ENCODE measurements at regions of chr13 and their contacts with region 1.

Region 1: DNA sequence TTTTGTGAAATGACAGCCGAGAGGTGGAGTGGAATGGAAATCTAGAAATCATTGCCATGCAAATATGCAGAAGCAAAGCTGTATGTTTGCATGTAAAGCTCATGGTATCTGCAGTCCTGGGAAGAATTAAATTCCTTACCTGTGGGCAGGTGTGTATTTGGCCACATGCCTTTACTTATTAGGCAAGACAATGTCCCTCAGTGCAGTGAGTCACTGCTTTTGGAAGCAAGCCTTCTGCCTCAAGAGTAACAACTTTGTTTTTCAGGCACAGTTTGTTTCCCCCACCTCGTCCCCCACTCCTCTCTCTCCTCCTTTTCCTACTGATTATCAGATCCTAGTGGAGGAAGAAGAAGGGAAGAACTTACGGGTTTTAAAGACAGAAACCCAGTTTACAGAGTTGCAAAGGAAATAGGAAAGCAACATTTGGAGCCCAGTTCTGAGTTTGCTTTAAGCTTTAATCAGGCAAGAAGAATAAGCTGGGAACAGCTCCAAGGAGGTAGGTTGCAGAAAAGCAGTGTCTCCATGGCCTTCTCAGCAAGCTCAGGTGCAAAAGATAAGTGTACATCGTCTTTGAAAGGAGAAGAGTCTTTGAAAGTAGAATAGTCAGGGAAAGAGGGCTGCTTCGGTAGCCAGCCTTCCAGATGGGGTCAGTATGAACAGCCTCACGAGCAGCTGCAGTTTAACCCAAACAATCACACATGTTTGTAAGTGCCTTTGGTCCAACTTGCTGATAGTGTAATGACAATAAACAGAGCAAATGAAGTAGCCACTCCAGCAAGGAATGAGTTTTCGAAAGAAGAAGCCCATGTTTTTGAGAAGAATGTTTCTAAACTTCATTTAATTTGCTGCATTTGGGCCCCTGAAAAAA is 190.1 kb downstream of the KLF5 start:
- DNase-seq: peak; percentile 92
- H3K4me3 Mint-ChIP-seq: peak overlapping the region; percentile 34
- H3K27ac Mint-ChIP-seq: peak overlapping the region; percentile 85
- H3K4me1 Mint-ChIP-seq: peaks cover 28% of the 10 kb centered on the region
- H3K27me3 Mint-ChIP-seq: no peaks in the 10 kb centered on the region
- CTCF ChIP-seq: no peak

Region 2: DNA sequence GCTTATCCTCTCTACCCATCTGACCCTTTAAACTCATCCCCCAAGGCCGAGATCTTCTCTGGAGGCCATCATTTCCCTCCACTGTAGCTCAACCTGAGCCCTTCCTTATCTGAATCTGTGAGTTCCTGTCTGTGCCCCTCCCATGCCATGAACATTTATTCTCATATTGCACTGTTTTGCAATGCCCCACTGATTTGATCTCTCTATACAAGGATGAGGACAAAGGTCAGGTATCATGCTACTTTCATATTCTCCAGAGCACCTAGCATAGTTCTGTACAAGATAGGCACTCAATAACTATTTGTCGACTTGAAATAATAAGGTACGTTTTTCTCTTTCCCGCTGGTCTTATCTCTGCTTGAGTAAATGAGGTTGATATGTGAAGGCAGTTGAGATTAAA is 54.6 kb before region 1 on chr13:
- CTCF ChIA-PET with region 1: interaction called, 4 read pairs
- POLR2A ChIA-PET with region 1: interaction called, 11 read pairs
- intact Hi-C with region 1: no loop called
- DNase-seq: no peak
- H3K4me3 Mint-ChIP-seq: no peak overlapping the region
- H3K27ac Mint-ChIP-seq: no peak overlapping the region
- H3K4me1 Mint-ChIP-seq: peaks cover 21% of the 10 kb centered on the region
- H3K27me3 Mint-ChIP-seq: no peaks in the 10 kb centered on the region
- CTCF ChIP-seq: no peak

Region 3: GRCh38 chr13:73200406-73200805 is 48.5 kb before region 1 on chr13:
- CTCF ChIA-PET with region 1: no interaction called
- POLR2A ChIA-PET with region 1: interaction called, 11 read pairs
- intact Hi-C with region 1: no loop called
- DNase-seq: peak; percentile 74
- H3K4me3 Mint-ChIP-seq: no peak overlapping the region
- H3K27ac Mint-ChIP-seq: peak overlapping the region; percentile 89
- H3K4me1 Mint-ChIP-seq: peaks cover 17% of the 10 kb centered on the region
- H3K27me3 Mint-ChIP-seq: no peaks in the 10 kb centered on the region
- CTCF ChIP-seq: no peak

Region 4: GRCh38 chr13:73259061-73260017 is 10.4 kb after region 1 on chr13:
- CTCF ChIA-PET with region 1: interaction called, 6 read pairs
- POLR2A ChIA-PET with region 1: interaction called, 36 read pairs
- intact Hi-C with region 1: no loop called
- DNase-seq: no peak
- H3K4me3 Mint-ChIP-seq: no peak overlapping the region
- H3K27ac Mint-ChIP-seq: no peak overlapping the region
- H3K4me1 Mint-ChIP-seq: peaks cover 15% of the 10 kb centered on the region
- H3K27me3 Mint-ChIP-seq: no peaks in the 10 kb centered on the region
- CTCF ChIP-seq: no peak

Region 5: DNA sequence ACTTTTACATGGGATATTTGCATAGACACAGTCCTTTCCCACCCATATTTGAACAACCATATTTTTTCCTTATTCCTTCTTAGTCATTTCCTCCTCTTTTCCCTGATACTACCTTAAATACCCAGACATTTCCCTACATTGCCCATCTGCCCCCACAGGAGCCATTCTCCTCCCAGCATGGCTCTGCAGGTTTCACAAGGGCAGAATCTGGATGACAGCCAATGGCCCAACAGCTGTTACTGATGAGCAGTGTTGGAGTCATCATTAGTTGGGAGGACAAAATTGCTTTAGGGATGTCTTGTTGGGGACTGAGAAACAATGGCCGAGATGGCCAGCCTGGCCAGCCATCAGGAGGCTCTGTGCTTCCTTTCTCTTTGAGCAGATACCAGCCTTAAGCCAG is 19.4 kb after region 1 on chr13:
- CTCF ChIA-PET with region 1: no interaction called
- POLR2A ChIA-PET with region 1: interaction called, 11 read pairs
- intact Hi-C with region 1: no loop called
- DNase-seq: peak; percentile 94
- H3K4me3 Mint-ChIP-seq: no peak overlapping the region
- H3K27ac Mint-ChIP-seq: no peak overlapping the region
- H3K4me1 Mint-ChIP-seq: peaks cover 20% of the 10 kb centered on the region
- H3K27me3 Mint-ChIP-seq: no peaks in the 10 kb centered on the region
- CTCF ChIP-seq: no peak

Region 6: DNA sequence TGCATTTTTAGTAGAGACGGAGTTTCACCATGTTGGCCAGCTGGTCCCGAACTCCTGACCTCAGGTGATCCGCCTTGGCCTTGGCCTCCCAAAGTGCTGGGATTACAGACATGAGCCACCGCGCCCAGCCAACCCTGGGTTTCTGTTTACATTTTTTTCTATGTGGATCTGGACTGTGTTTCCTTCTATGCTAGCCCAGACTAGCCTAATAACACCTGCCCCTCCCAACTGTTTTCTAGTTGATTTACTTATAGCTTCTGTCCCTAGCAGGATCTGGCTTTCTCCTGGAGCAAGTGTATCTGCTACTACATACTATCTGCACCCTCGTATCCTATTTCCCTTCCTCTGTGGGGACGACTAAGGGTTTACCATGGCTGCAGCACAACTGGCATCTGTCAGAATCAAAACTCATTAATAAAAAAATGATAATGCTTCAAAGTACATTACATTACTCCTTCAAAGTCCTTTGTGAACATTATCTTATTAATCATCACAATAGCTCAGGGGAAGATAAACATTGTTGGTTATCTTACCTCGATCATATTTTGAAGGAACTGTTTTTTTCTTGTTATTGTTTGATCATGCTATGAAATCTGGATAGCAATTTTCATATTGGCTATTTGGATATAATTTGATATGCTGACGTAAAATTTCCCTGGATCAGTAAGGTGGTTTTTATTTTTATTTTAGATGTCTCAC is 38.2 kb after region 1 on chr13:
- CTCF ChIA-PET with region 1: interaction called, 3 read pairs
- POLR2A ChIA-PET with region 1: interaction called, 12 read pairs
- intact Hi-C with region 1: no loop called
- DNase-seq: peak; percentile 49
- H3K4me3 Mint-ChIP-seq: no peak overlapping the region
- H3K27ac Mint-ChIP-seq: peak overlapping the region; percentile 83
- H3K4me1 Mint-ChIP-seq: peaks cover 18% of the 10 kb centered on the region
- H3K27me3 Mint-ChIP-seq: no peaks in the 10 kb centered on the region
- CTCF ChIP-seq: no peak

Measured in MCF 10A (cell line).